MCF 10A (cell line): ENCODE measurements at regions of chr12 and their contacts with region 1.

Region 1: GRCh38 chr12:110039085-110039807 is 9.1 kb downstream of the C12orf76 start:
- DNase-seq: peak; percentile 88
- H3K4me3 Mint-ChIP-seq: peak overlapping the region; percentile 79
- H3K27ac Mint-ChIP-seq: peak overlapping the region; percentile 100
- H3K4me1 Mint-ChIP-seq: peaks cover 18% of the 10 kb centered on the region
- H3K27me3 Mint-ChIP-seq: no peaks in the 10 kb centered on the region
- CTCF ChIP-seq: no peak

Region 2: GRCh38 chr12:109899783-109900751 is 139.2 kb before region 1 on chr12 and contains the start of gene TCHP:
- CTCF ChIA-PET with region 1: no interaction called
- POLR2A ChIA-PET with region 1: no interaction called
- intact Hi-C with region 1: no loop called
- DNase-seq: peak; percentile 86
- H3K4me3 Mint-ChIP-seq: peak within 1 kb of the TSS; percentile 98
- H3K27ac Mint-ChIP-seq: peak within 1 kb of the TSS; percentile 97
- H3K4me1 Mint-ChIP-seq: peaks cover 20% of the 10 kb centered on the region
- H3K27me3 Mint-ChIP-seq: no peaks in the 10 kb centered on the region
- CTCF ChIP-seq: peak; percentile 26
- total RNA-seq, gene TCHP: 26.4 and 36.3 TPM in 2 replicates

Region 3: GRCh38 chr12:109951751-109952150 is 87.5 kb before region 1 on chr12:
- CTCF ChIA-PET with region 1: no interaction called
- POLR2A ChIA-PET with region 1: no interaction called
- intact Hi-C with region 1: loop called (anchors 5 kb)
- DNase-seq: peak; percentile 67
- H3K4me3 Mint-ChIP-seq: peak overlapping the region; percentile 5
- H3K27ac Mint-ChIP-seq: peak overlapping the region; percentile 24
- H3K4me1 Mint-ChIP-seq: peaks cover 21% of the 10 kb centered on the region
- H3K27me3 Mint-ChIP-seq: no peaks in the 10 kb centered on the region
- CTCF ChIP-seq: no peak